GM12878 (cell line): ENCODE measurements at regions of chr1 and their contacts with region 1.

Region 1: GRCh38 chr1:220272047-220272840 is at the start of gene RAB3GAP2:
- DNase-seq: peak; percentile 89
- ATAC-seq: peak; percentile 95
- H3K4me3 ChIP-seq: peak within 1 kb of the TSS; percentile 96
- H3K27ac ChIP-seq: peak within 1 kb of the TSS; percentile 93
- H3K4me1 ChIP-seq: peaks cover 5% of the 10 kb centered on the region; the same call in 1 of the 2 replicates
- H3K27me3 ChIP-seq: no peaks in the 10 kb centered on the region
- CTCF ChIP-seq: no peak
- EP300 ChIP-seq: peak in 1 of 2 experiments; percentile 53; a peak in 1 of 4 replicates
- POLR2A ChIP-seq: peak; percentile 97
- RAD21 ChIP-seq: no peak
- polyA plus RNA-seq, gene RAB3GAP2: 11.9 to 15.6 TPM

Region 2: GRCh38 chr1:219744652-219745469 is 527.4 kb before region 1 on chr1:
- CTCF ChIA-PET with region 1: no interaction called
- POLR2A ChIA-PET with region 1: no interaction called
- RAD21 ChIA-PET with region 1: no interaction called
- SMC1A ChIA-PET with region 1: no interaction called
- in situ Hi-C with region 1: no loop called
- intact Hi-C with region 1: no loop called
- DNase-seq: no peak
- ATAC-seq: no peak
- H3K4me3 ChIP-seq: no peak overlapping the region
- H3K27ac ChIP-seq: no peak overlapping the region
- H3K4me1 ChIP-seq: no peaks in the 10 kb centered on the region
- H3K27me3 ChIP-seq: 0 out of 4 replicates have a peak, but pooled peaks cover 0 to 2% of the 10 kb centered on the region in 2 experiments
- CTCF ChIP-seq: no peak
- EP300 ChIP-seq: no peak
- POLR2A ChIP-seq: no peak
- RAD21 ChIP-seq: no peak

Region 3: DNA sequence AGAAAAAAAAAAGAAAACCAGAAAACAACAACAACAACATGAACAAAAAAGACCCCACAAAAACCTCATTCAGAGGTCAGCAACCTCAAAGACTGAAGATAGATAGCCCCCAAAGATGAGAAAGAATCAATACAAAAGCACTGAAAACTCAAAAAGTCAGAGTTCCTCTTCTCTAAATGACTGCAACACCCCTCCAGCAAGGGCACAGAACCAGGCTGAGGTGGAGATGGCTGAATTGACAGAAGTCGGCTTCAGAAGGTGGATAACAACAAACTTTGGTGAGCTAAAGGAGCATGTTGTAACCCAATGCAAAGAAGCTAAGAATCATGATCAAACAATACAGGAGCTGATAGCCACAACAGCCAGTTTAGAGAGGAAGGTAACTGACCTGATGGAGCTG is 17.0 kb before region 1 on chr1:
- CTCF ChIA-PET with region 1: interaction called, 4 read pairs
- POLR2A ChIA-PET with region 1: no interaction called
- RAD21 ChIA-PET with region 1: interaction called, 3 read pairs
- SMC1A ChIA-PET with region 1: interaction called, 11 read pairs
- in situ Hi-C with region 1: no loop called
- intact Hi-C with region 1: no loop called
- DNase-seq: no peak
- ATAC-seq: 0 out of 3 replicates have a peak, but pooled peaks have one; percentile 16
- H3K4me3 ChIP-seq: no peak overlapping the region
- H3K27ac ChIP-seq: no peak overlapping the region
- H3K4me1 ChIP-seq: no peaks in the 10 kb centered on the region
- H3K27me3 ChIP-seq: no peaks in the 10 kb centered on the region
- CTCF ChIP-seq: no peak
- EP300 ChIP-seq: no peak
- POLR2A ChIP-seq: no peak
- RAD21 ChIP-seq: no peak